Activated CD8-positive, alpha-beta T cell treated with anti-CD3 and anti-CD28 coated beads for 36 hours (primary cell): ENCODE measurements at regions of chr3 and their contacts with region 1.

Region 1: DNA sequence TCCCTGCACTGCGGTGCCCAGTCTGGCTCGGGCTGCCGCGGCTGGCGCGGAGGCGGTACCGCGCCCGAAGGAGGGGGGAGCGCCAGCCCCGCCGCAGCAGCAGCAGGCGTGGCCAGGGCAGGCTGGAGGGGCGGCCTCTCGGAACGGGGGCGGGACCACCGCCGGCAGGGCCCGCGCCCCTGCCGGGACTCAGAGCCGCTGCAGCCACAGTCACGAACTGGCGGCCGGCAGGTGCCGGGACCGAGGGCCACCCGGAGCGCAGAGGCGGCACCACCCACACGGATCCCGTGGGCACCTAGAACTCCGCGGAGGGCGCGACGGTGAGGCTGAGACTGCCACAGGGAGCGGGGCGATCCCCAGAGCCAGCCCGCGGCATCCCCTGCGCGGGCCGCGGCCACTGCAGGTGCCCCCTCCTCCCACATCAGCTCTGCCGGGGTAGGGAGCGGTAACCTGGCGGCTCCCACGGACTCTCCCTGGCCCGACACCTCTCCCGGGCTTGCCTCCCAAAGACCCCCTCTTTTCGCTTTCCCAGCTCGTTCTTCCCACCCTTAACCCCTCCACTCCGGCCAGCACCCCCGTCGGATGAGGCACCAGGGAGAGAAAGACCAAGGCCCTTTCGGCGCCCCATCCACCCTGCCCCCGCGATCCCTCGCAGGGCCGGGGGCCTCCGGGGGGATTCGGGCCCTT is at the start of gene VWA5B2:
- DNase-seq: peak; percentile 73
- ATAC-seq: peak; percentile 96
- H3K4me3 Mint-ChIP-seq: peak within 1 kb of the TSS; percentile 54
- H3K27ac Mint-ChIP-seq: no peak within 1 kb of the TSS
- H3K4me1 Mint-ChIP-seq: peaks cover 11% of the 10 kb centered on the region
- H3K27me3 Mint-ChIP-seq: peaks cover 37% of the 10 kb centered on the region
- CTCF ChIP-seq: no peak
- total RNA-seq, gene VWA5B2: not detected

Region 2: DNA sequence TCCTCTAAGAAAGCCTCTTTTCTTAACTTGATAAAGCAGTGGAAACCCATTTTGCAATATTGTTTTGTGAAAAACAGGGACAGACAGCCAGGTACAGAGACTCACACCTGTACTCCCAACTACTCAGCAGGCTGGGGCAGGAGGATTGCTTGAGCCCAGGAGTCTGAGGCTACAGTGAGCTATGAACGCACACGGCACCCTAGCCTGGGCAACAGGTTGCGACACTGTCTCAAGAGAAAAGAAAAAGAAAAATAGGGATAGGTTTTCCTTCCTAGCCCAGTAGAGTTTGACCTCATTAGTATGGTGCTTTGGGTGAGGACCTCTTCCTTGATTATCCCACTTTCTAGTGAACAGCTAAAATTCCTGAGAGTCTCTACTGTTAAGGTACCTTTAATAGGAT is 549.5 kb before region 1 on chr3:
- CTCF ChIA-PET with region 1: no interaction called
- POLR2A ChIA-PET with region 1: no interaction called
- intact Hi-C with region 1: no loop called
- DNase-seq: no peak
- ATAC-seq: no peak
- H3K4me3 Mint-ChIP-seq: no peak overlapping the region
- H3K27ac Mint-ChIP-seq: no peak overlapping the region
- H3K4me1 Mint-ChIP-seq: peaks cover 4% of the 10 kb centered on the region
- H3K27me3 Mint-ChIP-seq: no peaks in the 10 kb centered on the region
- CTCF ChIP-seq: no peak

Region 3: GRCh38 chr3:184145111-184145524 is 84.4 kb before region 1 on chr3:
- CTCF ChIA-PET with region 1: interaction called, 12 read pairs
- POLR2A ChIA-PET with region 1: no interaction called
- intact Hi-C with region 1: no loop called
- DNase-seq: peak; percentile 61
- ATAC-seq: peak; percentile 85
- H3K4me3 Mint-ChIP-seq: no peak overlapping the region
- H3K27ac Mint-ChIP-seq: peak overlapping the region; percentile 30
- H3K4me1 Mint-ChIP-seq: no peaks in the 10 kb centered on the region
- H3K27me3 Mint-ChIP-seq: no peaks in the 10 kb centered on the region
- CTCF ChIP-seq: peak; percentile 18

Region 4: DNA sequence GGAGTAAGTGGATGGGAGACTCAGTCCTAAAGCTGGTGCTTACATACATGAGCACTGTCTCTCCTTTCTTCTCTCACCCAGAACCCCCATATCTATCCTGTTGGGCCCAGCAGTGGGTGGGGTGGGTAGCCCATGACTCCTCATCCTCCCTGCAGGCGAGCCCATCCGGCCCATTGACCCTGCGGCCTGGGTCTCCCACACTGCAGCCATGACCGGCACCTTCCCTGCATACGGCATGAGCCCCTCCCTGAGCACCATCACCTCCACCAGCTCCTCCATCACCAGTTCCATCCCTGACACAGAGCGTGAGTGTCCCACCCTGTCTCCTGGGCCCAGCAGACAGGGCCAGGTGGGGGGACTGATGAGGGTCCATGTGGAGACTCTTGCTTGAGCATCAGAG is 62.9 kb before region 1 on chr3:
- CTCF ChIA-PET with region 1: no interaction called
- POLR2A ChIA-PET with region 1: no interaction called
- intact Hi-C with region 1: no loop called
- DNase-seq: no peak
- ATAC-seq: no peak
- H3K4me3 Mint-ChIP-seq: no peak overlapping the region
- H3K27ac Mint-ChIP-seq: no peak overlapping the region
- H3K4me1 Mint-ChIP-seq: no peaks in the 10 kb centered on the region
- H3K27me3 Mint-ChIP-seq: no peaks in the 10 kb centered on the region
- CTCF ChIP-seq: no peak

Region 5: DNA sequence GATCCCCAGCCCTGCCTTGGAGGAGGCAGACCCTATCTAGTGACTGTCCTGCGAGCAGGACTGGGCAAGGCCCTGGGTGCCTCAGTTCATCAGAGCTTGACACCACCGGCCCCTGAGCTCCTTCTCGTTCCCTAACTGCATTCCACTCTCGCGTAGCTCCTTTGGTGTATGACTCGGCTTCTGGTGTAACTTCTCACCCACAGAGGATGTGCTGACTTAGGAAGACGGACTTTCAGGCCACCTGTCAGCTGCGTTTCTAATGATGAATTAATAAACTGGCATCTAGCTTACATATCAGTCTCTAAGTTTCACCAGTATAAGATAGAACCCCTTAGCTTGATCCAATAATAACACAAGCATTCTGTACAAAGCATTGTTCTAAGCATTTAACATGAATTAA is 26.0 kb before region 1 on chr3:
- CTCF ChIA-PET with region 1: interaction called, 34 read pairs
- POLR2A ChIA-PET with region 1: no interaction called
- intact Hi-C with region 1: no loop called
- DNase-seq: no peak
- ATAC-seq: no peak
- H3K4me3 Mint-ChIP-seq: no peak overlapping the region
- H3K27ac Mint-ChIP-seq: no peak overlapping the region
- H3K4me1 Mint-ChIP-seq: no peaks in the 10 kb centered on the region
- H3K27me3 Mint-ChIP-seq: peaks cover 11% of the 10 kb centered on the region
- CTCF ChIP-seq: no peak

Region 6: DNA sequence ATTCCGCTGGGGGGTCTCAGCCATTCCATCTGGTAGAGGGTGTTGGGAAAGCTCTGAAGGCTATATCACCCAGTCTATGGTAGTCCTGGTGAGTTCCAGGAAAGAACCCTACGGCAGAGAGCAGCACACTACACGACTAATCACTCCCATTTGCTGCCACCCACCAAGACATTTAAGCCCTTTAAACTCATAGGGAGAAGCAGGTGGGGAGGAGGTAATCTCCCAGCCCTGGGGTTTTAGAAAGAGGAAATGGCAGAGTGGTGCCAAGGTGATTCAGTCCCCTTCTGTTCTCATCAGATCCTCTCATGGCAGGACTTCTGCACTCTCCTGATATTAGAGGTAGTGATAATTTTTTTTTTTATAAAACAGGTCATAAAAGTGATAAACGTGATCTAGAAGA is 10.7 kb before region 1 on chr3:
- CTCF ChIA-PET with region 1: interaction called, 46 read pairs
- POLR2A ChIA-PET with region 1: no interaction called
- intact Hi-C with region 1: no loop called
- DNase-seq: no peak
- ATAC-seq: no peak
- H3K4me3 Mint-ChIP-seq: no peak overlapping the region
- H3K27ac Mint-ChIP-seq: no peak overlapping the region
- H3K4me1 Mint-ChIP-seq: no peaks in the 10 kb centered on the region
- H3K27me3 Mint-ChIP-seq: peaks cover 12% of the 10 kb centered on the region
- CTCF ChIP-seq: no peak

Region 7: GRCh38 chr3:184250167-184250828 is 20.8 kb after region 1 on chr3:
- CTCF ChIA-PET with region 1: interaction called, 67 read pairs
- POLR2A ChIA-PET with region 1: interaction called, 6 read pairs
- intact Hi-C with region 1: no loop called
- DNase-seq: peak; percentile 98
- ATAC-seq: peak; percentile 67
- H3K4me3 Mint-ChIP-seq: peak overlapping the region; percentile 91
- H3K27ac Mint-ChIP-seq: peak overlapping the region; percentile 97
- H3K4me1 Mint-ChIP-seq: peaks cover 16% of the 10 kb centered on the region
- H3K27me3 Mint-ChIP-seq: no peaks in the 10 kb centered on the region
- CTCF ChIP-seq: peak; percentile 85

Region 8: DNA sequence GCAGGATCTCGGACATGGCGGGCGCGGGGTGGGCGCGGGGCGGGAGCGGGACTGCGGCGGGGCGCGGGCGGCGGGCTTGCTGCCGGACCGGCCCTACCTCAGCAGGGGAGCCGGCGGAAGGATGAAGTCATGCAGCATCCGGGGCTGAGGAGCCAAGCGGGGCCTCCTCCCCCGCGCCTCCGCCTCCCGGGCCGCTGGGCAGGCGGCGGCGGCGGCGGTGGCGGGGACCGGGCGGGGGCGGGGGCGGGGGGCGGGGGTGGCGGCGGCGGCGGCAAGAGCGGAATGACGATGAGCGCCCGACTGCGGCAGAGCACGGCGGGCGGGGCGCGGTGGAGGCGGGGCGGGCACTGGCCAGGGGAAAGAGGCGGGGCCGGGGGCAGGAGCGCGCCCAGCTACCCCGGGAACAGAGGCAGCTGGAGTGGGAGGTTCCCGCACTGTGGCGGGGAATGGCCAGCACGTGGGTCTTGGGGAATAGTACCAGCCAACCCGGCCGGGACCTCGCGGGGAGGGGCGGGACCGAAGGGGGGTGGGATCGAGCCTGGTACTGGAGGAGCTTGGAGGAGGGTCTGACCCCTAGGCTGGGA is 31.8 kb after region 1 on chr3 and contains the start of gene CAMK2N2:
- CTCF ChIA-PET with region 1: interaction called, 19 read pairs
- POLR2A ChIA-PET with region 1: interaction called, 5 read pairs
- intact Hi-C with region 1: no loop called
- DNase-seq: peak; percentile 66
- ATAC-seq: peak; percentile 66
- H3K4me3 Mint-ChIP-seq: peak within 1 kb of the TSS; percentile 78
- H3K27ac Mint-ChIP-seq: no peak within 1 kb of the TSS
- H3K4me1 Mint-ChIP-seq: peaks cover 17% of the 10 kb centered on the region
- H3K27me3 Mint-ChIP-seq: peaks cover 39% of the 10 kb centered on the region
- CTCF ChIP-seq: no peak
- total RNA-seq, gene CAMK2N2: 0.18 to 0.22 TPM

Region 9: GRCh38 chr3:184289426-184289938 is 59.9 kb after region 1 on chr3:
- CTCF ChIA-PET with region 1: interaction called, 48 read pairs
- POLR2A ChIA-PET with region 1: interaction called, 3 read pairs
- intact Hi-C with region 1: loop called (anchors 5 kb)
- DNase-seq: peak; percentile 80
- ATAC-seq: peak; percentile 85
- H3K4me3 Mint-ChIP-seq: no peak overlapping the region
- H3K27ac Mint-ChIP-seq: no peak overlapping the region
- H3K4me1 Mint-ChIP-seq: no peaks in the 10 kb centered on the region
- H3K27me3 Mint-ChIP-seq: peaks cover 8% of the 10 kb centered on the region
- CTCF ChIP-seq: peak; percentile 78

Region 10: GRCh38 chr3:184443380-184443779 is 213.8 kb after region 1 on chr3:
- CTCF ChIA-PET with region 1: no interaction called
- POLR2A ChIA-PET with region 1: no interaction called
- intact Hi-C with region 1: no loop called
- DNase-seq: no peak
- ATAC-seq: no peak
- H3K4me3 Mint-ChIP-seq: no peak overlapping the region
- H3K27ac Mint-ChIP-seq: no peak overlapping the region
- H3K4me1 Mint-ChIP-seq: peaks cover 5% of the 10 kb centered on the region
- H3K27me3 Mint-ChIP-seq: no peaks in the 10 kb centered on the region
- CTCF ChIP-seq: no peak